Caco-2 (cell line): ENCODE measurements at regions of chr1 and their contacts with region 1.

Region 1: GRCh38 chr1:63051886-63052285 is 268.0 kb downstream of the ATG4C start:
- DNase-seq: no peak
- H3K4me3 ChIP-seq: no peak overlapping the region
- H3K4me3 Mint-ChIP-seq: no peak overlapping the region
- H3K27ac Mint-ChIP-seq: no peak overlapping the region
- H3K4me1 ChIP-seq: no peaks in the 10 kb centered on the region
- H3K4me1 Mint-ChIP-seq: no peaks in the 10 kb centered on the region
- H3K27me3 ChIP-seq: no peaks in the 10 kb centered on the region
- H3K27me3 Mint-ChIP-seq: peaks cover 18% of the 10 kb centered on the region
- CTCF ChIP-seq: no peak

Region 2: DNA sequence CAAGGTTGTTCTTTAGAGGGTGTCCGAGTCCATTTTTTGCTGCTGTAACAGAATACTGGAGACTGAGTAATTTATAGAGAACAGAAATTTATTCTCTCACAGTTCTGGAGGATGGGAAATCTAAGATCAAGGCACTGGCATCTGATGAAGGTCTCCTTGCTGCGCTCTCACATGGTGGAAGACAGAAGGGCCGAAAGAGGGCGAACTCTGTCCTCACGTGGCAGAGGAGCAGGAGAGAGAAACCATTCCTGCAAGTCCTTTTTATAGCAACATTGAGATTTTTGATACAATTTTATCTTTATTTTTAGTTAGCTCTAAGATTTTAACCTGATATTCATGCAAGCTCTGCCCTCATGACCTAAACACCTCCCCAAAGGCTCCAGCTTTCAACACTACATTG is 219.6 kb before region 1 on chr1:
- CTCF ChIA-PET with region 1: no interaction called
- POLR2A ChIA-PET with region 1: no interaction called
- intact Hi-C with region 1: no loop called
- DNase-seq: no peak
- H3K4me3 ChIP-seq: no peak overlapping the region
- H3K4me3 Mint-ChIP-seq: no peak overlapping the region
- H3K27ac Mint-ChIP-seq: no peak overlapping the region
- H3K4me1 ChIP-seq: no peaks in the 10 kb centered on the region
- H3K4me1 Mint-ChIP-seq: no peaks in the 10 kb centered on the region
- H3K27me3 ChIP-seq: no peaks in the 10 kb centered on the region
- H3K27me3 Mint-ChIP-seq: no peaks in the 10 kb centered on the region
- CTCF ChIP-seq: no peak

Region 3: DNA sequence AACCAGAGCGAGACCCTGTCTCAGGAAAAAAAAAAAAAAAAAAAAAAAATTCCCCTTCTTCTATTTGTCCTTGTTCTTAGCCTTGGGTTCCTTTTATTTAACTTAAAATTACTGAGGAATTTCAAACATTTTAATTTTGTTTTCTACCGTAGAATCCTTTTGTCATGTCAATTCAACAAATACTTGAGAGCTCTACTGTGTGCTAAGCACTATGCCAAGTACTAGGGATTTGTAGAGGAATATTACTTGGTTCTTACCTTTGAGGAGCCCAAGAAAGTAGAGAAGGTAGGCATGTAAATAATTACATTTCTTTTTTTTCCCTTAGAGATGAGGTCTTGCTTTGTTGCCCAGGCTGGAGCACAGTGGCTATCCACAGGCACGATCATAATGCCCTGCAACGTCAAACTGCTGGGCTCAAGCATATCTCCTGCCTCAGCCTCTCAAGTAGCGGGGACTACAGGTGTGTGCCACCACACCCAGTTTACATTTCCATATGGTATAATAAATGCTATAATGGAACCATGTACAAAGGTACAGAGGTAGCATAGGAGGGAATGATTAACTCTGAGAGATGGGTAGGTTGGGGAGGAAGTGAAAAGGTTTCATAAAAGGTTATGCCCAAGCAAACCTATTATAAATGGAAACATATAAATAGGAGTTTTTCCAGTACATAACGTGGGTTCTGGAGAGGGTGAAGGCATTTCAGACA is 163.9 kb before region 1 on chr1:
- CTCF ChIA-PET with region 1: no interaction called
- POLR2A ChIA-PET with region 1: interaction called, 13 read pairs
- intact Hi-C with region 1: no loop called
- DNase-seq: no peak
- H3K4me3 ChIP-seq: no peak overlapping the region
- H3K4me3 Mint-ChIP-seq: no peak overlapping the region
- H3K27ac Mint-ChIP-seq: no peak overlapping the region
- H3K4me1 ChIP-seq: no peaks in the 10 kb centered on the region
- H3K4me1 Mint-ChIP-seq: no peaks in the 10 kb centered on the region
- H3K27me3 ChIP-seq: no peaks in the 10 kb centered on the region
- H3K27me3 Mint-ChIP-seq: peaks cover 9% of the 10 kb centered on the region
- CTCF ChIP-seq: no peak

Region 4: GRCh38 chr1:63305043-63305442 is 253.2 kb after region 1 on chr1:
- CTCF ChIA-PET with region 1: no interaction called
- POLR2A ChIA-PET with region 1: no interaction called
- intact Hi-C with region 1: no loop called
- DNase-seq: no peak
- H3K4me3 ChIP-seq: no peak overlapping the region
- H3K4me3 Mint-ChIP-seq: no peak overlapping the region
- H3K27ac Mint-ChIP-seq: no peak overlapping the region
- H3K4me1 ChIP-seq: no peaks in the 10 kb centered on the region
- H3K4me1 Mint-ChIP-seq: no peaks in the 10 kb centered on the region
- H3K27me3 ChIP-seq: no peaks in the 10 kb centered on the region
- H3K27me3 Mint-ChIP-seq: peaks cover 20% of the 10 kb centered on the region
- CTCF ChIP-seq: no peak